ENCODE measurements at regions of chr18 and their contacts with region 1.

Region 1: DNA sequence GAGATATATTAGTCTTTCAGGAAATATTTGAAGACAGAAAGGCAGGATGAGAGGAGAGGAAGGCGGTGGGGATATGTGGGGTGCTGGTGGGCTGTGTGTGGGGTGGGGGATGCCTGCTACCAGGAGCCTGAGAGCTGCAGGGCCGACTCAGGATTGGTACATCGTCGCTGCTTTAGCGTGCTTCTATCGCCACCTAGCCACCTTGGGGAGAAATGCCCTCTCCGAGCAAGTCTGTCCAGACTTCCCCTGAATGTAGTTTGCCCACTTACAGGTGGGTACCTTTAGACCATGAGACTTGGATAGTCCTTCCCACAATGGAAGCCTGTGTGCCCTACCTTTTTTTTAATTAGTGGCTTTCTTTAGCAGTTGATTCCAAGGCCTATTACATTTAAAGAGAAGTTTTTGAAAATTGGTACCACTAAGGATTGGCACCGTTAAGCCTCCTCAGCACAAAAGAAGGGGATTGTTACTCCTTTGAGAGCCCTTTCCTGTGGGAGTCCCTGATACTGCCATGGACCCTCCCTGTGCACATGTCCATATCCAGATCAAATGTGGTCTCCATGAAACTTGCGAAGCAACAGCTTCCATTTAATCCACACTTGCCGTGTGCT is 114.1 kb upstream of the NDUFV2 start:
- DNase-seq: peak; percentile 65
- ATAC-seq: peak; percentile 74
- H3K4me3 Mint-ChIP-seq: no peak overlapping the region
- H3K27ac Mint-ChIP-seq: no peak overlapping the region
- H3K4me1 Mint-ChIP-seq: no peaks in the 10 kb centered on the region
- H3K27me3 Mint-ChIP-seq: peaks cover 6% of the 10 kb centered on the region
- CTCF ChIP-seq: peak; percentile 80

Region 2: GRCh38 chr18:8478166-8478967 is 510.0 kb before region 1 on chr18:
- CTCF ChIA-PET with region 1: interaction called, 14 read pairs
- POLR2A ChIA-PET with region 1: no interaction called
- intact Hi-C with region 1: no loop called
- DNase-seq: peak; percentile 68
- ATAC-seq: peak; percentile 88
- H3K4me3 Mint-ChIP-seq: no peak overlapping the region
- H3K27ac Mint-ChIP-seq: no peak overlapping the region
- H3K4me1 Mint-ChIP-seq: no peaks in the 10 kb centered on the region
- H3K27me3 Mint-ChIP-seq: peaks cover 5% of the 10 kb centered on the region
- CTCF ChIP-seq: peak; percentile 67

Region 3: GRCh38 chr18:8998481-8999217 is 10.3 kb after region 1 on chr18:
- CTCF ChIA-PET with region 1: interaction called, 25 read pairs
- POLR2A ChIA-PET with region 1: no interaction called
- intact Hi-C with region 1: no loop called
- DNase-seq: no peak
- ATAC-seq: no peak
- H3K4me3 Mint-ChIP-seq: no peak overlapping the region
- H3K27ac Mint-ChIP-seq: no peak overlapping the region
- H3K4me1 Mint-ChIP-seq: no peaks in the 10 kb centered on the region
- H3K27me3 Mint-ChIP-seq: peaks cover 9% of the 10 kb centered on the region
- CTCF ChIP-seq: no peak